Endothelial cell of umbilical vein (primary cell): ENCODE measurements at regions of chrX and their contacts with region 1.

Region 1: GRCh38 chrX:13341491-13342101 is 21.7 kb upstream of the ATXN3L start:
- DNase-seq: peak; percentile 59
- H3K4me3 ChIP-seq: no peak overlapping the region
- H3K27ac ChIP-seq: peak overlapping the region; percentile 90
- H3K4me1 ChIP-seq: peaks cover 20% of the 10 kb centered on the region
- H3K27me3 ChIP-seq: no peaks in the 10 kb centered on the region
- CTCF ChIP-seq: no peak
- POLR2A ChIP-seq: no peak

Region 2: DNA sequence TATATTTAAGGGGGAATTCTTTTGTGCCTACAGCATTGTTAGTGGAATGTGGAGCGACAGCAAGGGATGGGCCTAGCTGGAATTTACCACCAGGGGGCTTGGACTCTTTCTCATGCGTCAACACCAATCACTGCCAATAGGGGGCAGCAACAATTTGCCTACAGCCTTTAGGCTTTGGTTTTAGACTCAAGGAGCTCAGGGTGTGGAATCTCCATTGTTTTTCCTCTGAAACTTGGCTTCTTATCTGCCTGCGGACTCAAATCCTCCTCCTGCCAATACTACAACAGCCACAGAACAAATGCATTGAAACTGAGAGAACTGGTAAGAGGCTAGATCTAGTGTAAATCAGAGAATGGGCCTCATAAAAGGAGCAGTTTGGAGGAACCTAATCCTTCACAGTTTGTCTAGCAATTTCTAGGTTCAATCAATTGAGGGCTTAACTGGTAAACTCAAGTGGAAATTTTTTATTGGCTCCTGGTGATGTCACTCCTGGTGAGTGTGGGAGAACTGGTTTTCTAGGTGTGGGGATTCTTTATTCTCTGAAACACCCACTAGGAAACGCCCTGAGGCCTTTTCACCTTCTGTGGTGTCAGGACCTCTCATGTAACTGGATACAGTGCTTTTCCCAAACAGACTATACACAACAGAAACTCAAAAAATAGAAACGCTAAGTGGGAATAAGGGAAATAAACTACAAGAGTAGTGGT is 394.6 kb before region 1 on chrX:
- CTCF ChIA-PET with region 1: interaction called, 6 read pairs
- POLR2A ChIA-PET with region 1: no interaction called
- dilution Hi-C with region 1: no loop called
- intact Hi-C with region 1: loop called (anchors 1 kb)
- DNase-seq: peak; percentile 90
- H3K4me3 ChIP-seq: no peak overlapping the region
- H3K27ac ChIP-seq: peak overlapping the region; percentile 64
- H3K4me1 ChIP-seq: peaks cover 27% of the 10 kb centered on the region
- H3K27me3 ChIP-seq: no peaks in the 10 kb centered on the region
- CTCF ChIP-seq: peak; percentile 85 to 87
- POLR2A ChIP-seq: no peak

Region 3: GRCh38 chrX:13167481-13168231 is 173.9 kb before region 1 on chrX:
- CTCF ChIA-PET with region 1: no interaction called
- POLR2A ChIA-PET with region 1: no interaction called
- dilution Hi-C with region 1: no loop called
- intact Hi-C with region 1: loop called (anchors 1 kb)
- DNase-seq: peak; percentile 79
- H3K4me3 ChIP-seq: no peak overlapping the region
- H3K27ac ChIP-seq: peak overlapping the region; percentile 93
- H3K4me1 ChIP-seq: peaks cover 38% of the 10 kb centered on the region
- H3K27me3 ChIP-seq: no peaks in the 10 kb centered on the region
- CTCF ChIP-seq: no peak
- POLR2A ChIP-seq: no peak

Region 4: GRCh38 chrX:13223868-13224555 is 117.6 kb before region 1 on chrX:
- CTCF ChIA-PET with region 1: no interaction called
- POLR2A ChIA-PET with region 1: no interaction called
- dilution Hi-C with region 1: no loop called
- intact Hi-C with region 1: loop called (anchors 1 kb)
- DNase-seq: peak; percentile 91
- H3K4me3 ChIP-seq: no peak overlapping the region
- H3K27ac ChIP-seq: peak overlapping the region; percentile 87
- H3K4me1 ChIP-seq: peaks cover 16% of the 10 kb centered on the region
- H3K27me3 ChIP-seq: no peaks in the 10 kb centered on the region
- CTCF ChIP-seq: peak in 1 of 2 donors; percentile 14
- POLR2A ChIP-seq: no peak

Region 5: DNA sequence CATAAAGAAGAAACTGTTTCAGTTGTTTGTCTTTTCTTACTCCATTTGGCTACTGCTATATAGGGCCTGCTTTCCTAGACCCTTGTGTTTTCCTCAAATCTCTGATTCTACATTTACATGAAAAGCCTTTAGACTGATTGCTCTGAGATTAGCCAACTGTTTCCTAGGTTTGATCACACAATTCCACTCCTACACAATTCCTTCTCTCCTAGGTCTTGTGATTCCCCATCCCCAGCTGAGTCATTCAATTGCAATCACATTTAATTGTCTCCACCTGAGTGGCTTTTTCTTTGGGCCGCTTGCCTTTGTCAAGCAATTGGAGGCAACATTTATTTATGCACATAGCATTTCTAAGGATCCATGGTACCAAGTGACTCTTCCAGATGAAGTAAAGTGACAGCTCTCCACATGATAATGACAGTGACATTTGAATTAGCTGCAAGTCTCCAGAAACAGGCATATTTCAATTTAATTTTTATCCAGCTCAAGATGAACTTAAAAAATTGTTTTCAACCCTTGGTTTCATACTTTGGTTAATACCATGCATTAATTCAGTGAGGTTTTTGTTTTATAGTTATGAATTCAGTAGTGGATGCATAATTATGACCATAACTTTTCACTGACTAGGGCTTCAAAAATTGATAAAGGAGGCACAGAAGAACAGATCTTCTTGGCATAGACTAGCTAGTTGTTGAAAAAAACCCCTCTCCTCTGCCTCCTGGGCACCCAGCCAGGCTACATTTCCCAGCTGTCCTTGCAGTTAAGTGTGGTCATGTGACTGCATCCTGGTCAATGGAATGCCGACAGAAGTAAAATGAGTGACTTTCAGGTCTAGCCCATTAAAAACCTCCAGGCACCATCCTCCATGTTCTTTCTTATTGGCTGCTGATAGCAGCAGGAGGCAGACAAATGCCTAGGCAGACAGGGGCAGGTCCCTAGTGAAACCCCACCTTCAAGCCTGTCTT is 57.4 kb before region 1 on chrX:
- CTCF ChIA-PET with region 1: interaction called, 6 read pairs
- POLR2A ChIA-PET with region 1: no interaction called
- dilution Hi-C with region 1: no loop called
- intact Hi-C with region 1: loop called (anchors 1 kb)
- DNase-seq: peak; percentile 71
- H3K4me3 ChIP-seq: no peak overlapping the region
- H3K27ac ChIP-seq: peak overlapping the region; percentile 62
- H3K4me1 ChIP-seq: peaks cover 49% of the 10 kb centered on the region
- H3K27me3 ChIP-seq: no peaks in the 10 kb centered on the region
- CTCF ChIP-seq: no peak
- POLR2A ChIP-seq: no peak

Region 6: GRCh38 chrX:13398073-13398823 is 56.7 kb after region 1 on chrX:
- CTCF ChIA-PET with region 1: interaction called, 4 read pairs
- POLR2A ChIA-PET with region 1: no interaction called
- dilution Hi-C with region 1: no loop called
- intact Hi-C with region 1: loop called (anchors 1 kb)
- DNase-seq: peak; percentile 95
- H3K4me3 ChIP-seq: no peak overlapping the region
- H3K27ac ChIP-seq: peak overlapping the region; percentile 93
- H3K4me1 ChIP-seq: peaks cover 31% of the 10 kb centered on the region
- H3K27me3 ChIP-seq: no peaks in the 10 kb centered on the region
- CTCF ChIP-seq: no peak
- POLR2A ChIP-seq: peak; percentile 37